Caco-2 (cell line): ENCODE measurements at regions of chr2 and their contacts with region 1.

Region 1: DNA sequence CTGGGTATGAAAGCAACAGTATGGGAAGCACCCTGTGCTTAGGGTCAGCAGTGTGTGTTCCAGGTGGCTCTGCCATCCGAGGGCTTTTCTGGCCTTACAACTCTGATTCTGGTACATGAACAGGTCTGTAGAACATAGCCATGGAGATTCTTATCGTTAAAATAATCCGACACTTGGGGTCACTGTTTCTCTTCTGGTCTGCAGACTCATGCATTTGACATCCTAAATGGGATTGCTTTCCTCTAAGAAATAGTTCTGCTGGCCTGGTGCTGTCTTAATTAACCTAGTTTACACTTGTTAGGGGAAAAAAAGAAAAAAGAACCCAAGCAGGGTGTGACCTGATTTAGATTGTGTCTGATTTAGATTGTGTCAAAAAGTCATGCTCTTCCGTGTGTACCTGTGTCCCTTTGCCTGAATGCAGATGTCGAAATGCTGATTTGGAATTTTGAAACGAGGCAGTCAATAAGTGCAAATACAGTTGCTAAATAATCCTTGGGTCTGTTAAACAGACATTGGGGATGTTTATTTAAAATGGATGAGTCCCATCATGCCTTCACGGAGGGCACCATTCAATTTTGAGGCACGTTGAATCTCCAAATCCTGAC is 59.6 kb downstream of the TRPM8 start:
- DNase-seq: peak in 1 of 2 experiments; percentile 50
- H3K4me3 ChIP-seq: no peak overlapping the region
- H3K4me3 Mint-ChIP-seq: no peak overlapping the region
- H3K27ac Mint-ChIP-seq: no peak overlapping the region
- H3K4me1 ChIP-seq: no peaks in the 10 kb centered on the region
- H3K4me1 Mint-ChIP-seq: peaks cover 11% of the 10 kb centered on the region
- H3K27me3 ChIP-seq: no peaks in the 10 kb centered on the region
- H3K27me3 Mint-ChIP-seq: no peaks in the 10 kb centered on the region
- CTCF ChIP-seq: peak; percentile 34 to 44

Region 2: GRCh38 chr2:234102112-234102511 is 125.3 kb after region 1 on chr2:
- CTCF ChIA-PET with region 1: no interaction called
- POLR2A ChIA-PET with region 1: no interaction called
- intact Hi-C with region 1: no loop called
- DNase-seq: peak; percentile 7 to 34
- H3K4me3 ChIP-seq: no peak overlapping the region
- H3K4me3 Mint-ChIP-seq: no peak overlapping the region
- H3K27ac Mint-ChIP-seq: no peak overlapping the region
- H3K4me1 ChIP-seq: no peaks in the 10 kb centered on the region
- H3K4me1 Mint-ChIP-seq: no peaks in the 10 kb centered on the region
- H3K27me3 ChIP-seq: no peaks in the 10 kb centered on the region
- H3K27me3 Mint-ChIP-seq: peaks cover 3% of the 10 kb centered on the region
- CTCF ChIP-seq: no peak

Region 3: GRCh38 chr2:234406085-234406484 is 429.3 kb after region 1 on chr2:
- CTCF ChIA-PET with region 1: no interaction called
- POLR2A ChIA-PET with region 1: no interaction called
- intact Hi-C with region 1: loop called (anchors 2 kb)
- DNase-seq: peak; percentile 42 to 46
- H3K4me3 ChIP-seq: no peak overlapping the region
- H3K4me3 Mint-ChIP-seq: no peak overlapping the region
- H3K27ac Mint-ChIP-seq: no peak overlapping the region
- H3K4me1 ChIP-seq: peaks cover 30% of the 10 kb centered on the region
- H3K4me1 Mint-ChIP-seq: peaks cover 28% of the 10 kb centered on the region
- H3K27me3 ChIP-seq: no peaks in the 10 kb centered on the region
- H3K27me3 Mint-ChIP-seq: no peaks in the 10 kb centered on the region
- CTCF ChIP-seq: peak in 1 of 2 experiments; percentile 15

Region 4: GRCh38 chr2:234500394-234501006 is 523.7 kb after region 1 on chr2:
- CTCF ChIA-PET with region 1: no interaction called
- POLR2A ChIA-PET with region 1: no interaction called
- intact Hi-C with region 1: loop called (anchors 1 kb)
- DNase-seq: peak; percentile 56 to 60
- H3K4me3 ChIP-seq: no peak overlapping the region
- H3K4me3 Mint-ChIP-seq: no peak overlapping the region
- H3K27ac Mint-ChIP-seq: no peak overlapping the region
- H3K4me1 ChIP-seq: peaks cover 6% of the 10 kb centered on the region
- H3K4me1 Mint-ChIP-seq: peaks cover 8% of the 10 kb centered on the region
- H3K27me3 ChIP-seq: no peaks in the 10 kb centered on the region
- H3K27me3 Mint-ChIP-seq: no peaks in the 10 kb centered on the region
- CTCF ChIP-seq: peak; percentile 34 to 46

Region 5: GRCh38 chr2:234544659-234545611 is 568.1 kb after region 1 on chr2:
- CTCF ChIA-PET with region 1: no interaction called
- POLR2A ChIA-PET with region 1: no interaction called
- intact Hi-C with region 1: loop called (anchors 1 kb)
- DNase-seq: peak; percentile 59 to 72
- H3K4me3 ChIP-seq: no peak overlapping the region
- H3K4me3 Mint-ChIP-seq: no peak overlapping the region
- H3K27ac Mint-ChIP-seq: no peak overlapping the region
- H3K4me1 ChIP-seq: no peaks in the 10 kb centered on the region
- H3K4me1 Mint-ChIP-seq: peaks cover 10% of the 10 kb centered on the region
- H3K27me3 ChIP-seq: no peaks in the 10 kb centered on the region
- H3K27me3 Mint-ChIP-seq: no peaks in the 10 kb centered on the region
- CTCF ChIP-seq: peak; percentile 79 to 81